Motor neuron (in vitro differentiated cells): ENCODE measurements at regions of chrX and their contacts with region 1.

Region 1: DNA sequence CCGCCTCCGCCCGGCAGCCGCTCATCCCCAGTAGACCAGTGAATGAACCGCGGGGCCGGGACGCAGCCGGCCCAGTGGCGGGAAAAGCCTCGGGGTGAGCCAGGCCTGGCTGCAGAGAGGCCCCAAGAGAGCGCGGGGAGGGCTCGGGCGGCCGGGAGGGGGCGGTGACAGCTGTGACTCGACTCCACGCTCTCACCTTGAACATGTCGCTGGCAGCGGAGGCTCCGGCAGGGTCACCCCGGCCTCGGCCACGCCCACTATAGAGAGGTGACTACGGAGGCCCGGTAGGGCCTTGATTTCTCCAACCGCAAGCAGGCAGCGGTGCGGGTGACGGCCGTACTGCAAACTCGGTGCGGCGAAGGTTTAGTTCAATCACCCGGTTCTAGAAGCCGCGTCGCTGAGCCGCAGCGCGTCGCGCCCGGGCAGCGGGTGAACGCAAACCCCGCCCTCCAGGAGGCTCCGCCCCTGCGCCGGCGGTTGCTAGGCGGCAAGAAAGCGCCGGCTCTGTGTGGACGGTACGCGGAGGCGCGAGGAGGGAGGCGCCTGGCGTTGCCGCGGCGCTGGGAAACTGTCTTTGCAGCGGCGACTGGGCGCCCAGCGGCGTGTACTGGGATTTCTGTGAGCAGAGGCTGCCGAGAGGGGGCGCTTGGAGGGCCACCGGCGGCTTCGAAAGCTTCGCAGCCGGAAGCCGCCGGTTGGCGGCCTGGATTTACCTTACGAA is at the starts of genes APOO and CXorf58:
- ATAC-seq: peak; percentile 92 to 95 (median 93)
- H3K4me3 ChIP-seq: peak within 1 kb of the TSS; percentile 53 to 60 (median 58)
- H3K27ac ChIP-seq: peak within 1 kb of the TSS; percentile 62 to 85
- H3K4me1 ChIP-seq: peaks cover 0 to 3% of the 10 kb centered on the region in 2 donors
- total RNA-seq, gene APOO: 26.1 to 78.8 (median 51.7) TPM
- total RNA-seq, gene CXorf58: 0.21 to 0.43 (median 0.33) TPM in 3 of 8 experiments, not detected in the others

Region 2: GRCh38 chrX:23511793-23512192 is 395.9 kb before region 1 on chrX:
- in situ Hi-C with region 1: no loop called
- ATAC-seq: no peak
- H3K4me3 ChIP-seq: no peak overlapping the region
- H3K27ac ChIP-seq: no peak overlapping the region
- H3K4me1 ChIP-seq: no peaks in the 10 kb centered on the region

Region 3: GRCh38 chrX:23667239-23668177 is 240.2 kb before region 1 on chrX and contains the start of gene PRDX4:
- in situ Hi-C with region 1: no loop called
- ATAC-seq: peak; percentile 90 to 97 (median 96)
- H3K4me3 ChIP-seq: peak within 1 kb of the TSS; percentile 56 to 94 (median 70)
- H3K27ac ChIP-seq: peak within 1 kb of the TSS; percentile 74 to 94
- H3K4me1 ChIP-seq: peaks cover 6% of the 10 kb centered on the region in 2 donors
- total RNA-seq, gene PRDX4: 61.5 to 555 (median 107) TPM

Region 4: DNA sequence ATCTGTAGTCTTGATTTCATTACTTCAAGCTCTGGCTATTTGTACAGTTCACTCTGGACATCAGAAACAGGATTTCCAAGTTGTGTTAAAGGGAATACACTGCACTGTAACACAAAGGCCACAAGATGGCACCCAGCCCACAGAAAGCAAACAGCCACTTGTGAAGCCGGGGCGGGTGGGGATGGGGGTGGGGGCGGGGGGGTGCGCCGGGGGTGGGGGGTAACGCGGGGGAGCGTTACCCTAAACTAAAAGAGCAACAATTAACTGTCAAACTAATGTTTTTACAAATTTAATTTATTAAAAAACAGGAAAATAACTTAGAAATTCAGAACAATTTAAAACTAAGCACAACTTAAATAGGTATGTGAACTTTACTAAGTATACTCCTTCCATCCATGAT is 213.1 kb before region 1 on chrX:
- in situ Hi-C with region 1: loop called in 2 of 9 experiments (anchors 10 to 25 kb)
- ATAC-seq: peak in 4 of 8 experiments; percentile 39 to 82 (median 69)
- H3K4me3 ChIP-seq: no peak overlapping the region
- H3K27ac ChIP-seq: no peak overlapping the region
- H3K4me1 ChIP-seq: no peaks in the 10 kb centered on the region

Region 5: GRCh38 chrX:23782863-23783568 is 124.6 kb before region 1 on chrX and contains the start of gene SAT1:
- in situ Hi-C with region 1: loop called in 1 of 9 experiments (anchors 25 kb)
- ATAC-seq: peak; percentile 70 to 99 (median 98)
- H3K4me3 ChIP-seq: peak within 1 kb of the TSS; percentile 50 to 73 (median 67)
- H3K27ac ChIP-seq: no peak within 1 kb of the TSS
- H3K4me1 ChIP-seq: no peaks in the 10 kb centered on the region
- total RNA-seq, gene SAT1: 13.3 to 269 (median 89.1) TPM

Region 6: DNA sequence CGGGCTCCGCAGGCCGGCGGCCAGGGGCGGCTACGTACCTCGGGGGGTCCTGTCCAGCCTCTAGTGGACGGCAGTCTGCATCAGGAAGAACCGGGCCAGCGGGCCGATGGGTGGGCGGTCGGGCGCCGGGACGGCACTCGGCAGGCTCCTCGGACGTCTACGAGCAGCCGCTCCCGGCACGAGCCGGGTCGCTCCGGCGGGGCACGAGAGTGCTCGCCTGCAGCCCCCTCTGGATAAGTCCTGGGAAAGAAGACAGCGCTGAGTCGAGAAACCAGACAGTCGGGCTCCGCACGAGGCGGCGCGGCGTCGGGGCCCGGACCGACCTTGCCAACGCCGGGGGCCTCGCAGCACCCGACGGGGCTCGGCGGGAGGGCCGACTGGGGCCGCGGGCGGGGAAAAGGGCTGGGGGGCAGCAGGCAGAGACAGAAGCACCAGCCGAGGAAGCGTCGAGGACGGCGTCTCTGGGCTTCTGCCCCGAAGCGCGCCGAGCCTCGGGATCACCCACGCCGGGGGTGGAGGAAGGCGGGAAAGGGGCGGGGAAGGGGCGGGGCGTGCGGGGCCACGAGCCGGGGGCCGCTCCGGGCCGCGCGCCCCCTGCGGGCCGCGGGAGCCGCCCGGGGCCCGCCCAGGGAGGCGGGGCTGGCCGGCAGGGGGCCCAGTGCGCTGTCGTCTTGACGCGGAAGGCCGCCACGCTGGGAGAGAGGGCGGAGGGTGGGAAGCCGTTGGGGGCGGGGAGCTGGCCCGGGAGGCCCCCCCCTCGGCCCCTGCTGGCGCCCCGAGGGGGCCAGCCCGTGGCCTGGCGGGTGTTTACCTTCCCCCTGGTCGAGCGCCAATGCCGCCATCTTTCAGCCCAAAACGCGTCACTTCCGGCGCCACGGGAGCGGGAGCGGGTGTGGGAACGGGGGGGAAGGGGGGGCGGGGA is 117.4 kb after region 1 on chrX:
- in situ Hi-C with region 1: loop called in 1 of 9 experiments (anchors 25 kb)
- ATAC-seq: peak; percentile 84 to 95 (median 93)
- H3K4me3 ChIP-seq: peak overlapping the region; percentile 71 to 88 (median 86)
- H3K27ac ChIP-seq: peak overlapping the region; percentile 98 to 99
- H3K4me1 ChIP-seq: peaks cover 0 to 5% of the 10 kb centered on the region in 2 donors